ENCODE measurements at regions of chr5 and their contacts with region 1.

Region 1: GRCh38 chr5:15254607-15255006 is 245.4 kb upstream of the FBXL7 start:
- DNase-seq: no peak
- H3K4me3 ChIP-seq: no peak overlapping the region
- H3K27ac ChIP-seq: no peak overlapping the region
- H3K4me1 ChIP-seq: no peaks in the 10 kb centered on the region
- H3K27me3 ChIP-seq: no peaks in the 10 kb centered on the region
- CTCF ChIP-seq: no peak
- POLR2A ChIP-seq: no peak

Region 2: DNA sequence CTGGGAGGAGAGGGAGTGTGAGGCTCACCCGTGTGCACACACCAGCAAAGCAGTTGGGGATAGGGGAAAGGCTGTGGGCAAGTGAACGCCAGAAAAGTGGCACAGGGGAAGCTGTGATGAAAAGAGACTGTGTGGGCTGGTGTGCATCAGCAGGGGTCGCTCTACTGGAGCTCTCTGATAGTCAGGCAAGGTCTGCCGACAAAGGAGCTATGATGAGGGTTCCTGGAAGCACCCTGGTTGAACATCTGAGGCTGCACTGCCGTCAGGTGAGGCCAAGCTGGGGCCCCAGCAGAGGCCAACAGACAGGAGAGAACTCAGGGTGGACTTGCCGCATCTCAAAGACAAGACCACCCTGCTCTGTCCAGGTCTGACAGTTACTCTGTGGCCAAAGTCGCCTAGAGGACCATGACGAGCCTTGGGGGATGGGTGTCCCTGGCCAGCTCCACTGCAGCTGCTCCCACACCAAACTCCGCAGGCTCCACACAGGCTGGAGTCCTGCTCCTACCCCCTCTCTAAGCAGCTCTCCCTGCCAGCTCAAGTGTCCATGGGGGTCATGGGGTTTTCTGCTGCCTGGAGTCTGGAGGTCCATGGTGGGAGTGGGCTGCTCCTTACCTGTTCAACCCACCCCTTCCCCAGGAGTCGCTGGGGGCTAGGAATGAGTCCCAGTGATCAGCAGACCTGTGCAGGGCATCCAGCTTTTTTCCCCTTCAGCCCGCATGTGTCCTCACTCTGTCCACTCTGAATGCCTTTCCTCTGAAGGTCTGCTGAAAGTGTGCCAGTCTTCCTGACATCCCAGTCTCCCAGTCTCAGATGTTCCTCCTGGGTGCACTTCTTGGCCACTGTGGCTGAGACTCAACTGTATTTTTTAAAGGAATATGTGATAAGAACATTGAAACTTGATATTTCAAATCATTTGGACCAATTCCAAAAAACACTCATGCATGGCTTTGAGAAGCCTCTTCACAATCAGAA is 121.9 kb before region 1 on chr5:
- intact Hi-C with region 1: loop called (anchors 10 kb)
- DNase-seq: no peak
- H3K4me3 ChIP-seq: no peak overlapping the region
- H3K27ac ChIP-seq: no peak overlapping the region
- H3K4me1 ChIP-seq: no peaks in the 10 kb centered on the region
- H3K27me3 ChIP-seq: no peaks in the 10 kb centered on the region
- CTCF ChIP-seq: no peak
- POLR2A ChIP-seq: no peak

Measured in prostate gland (tissue), 2 donors.